ENCODE measurements at regions of chr2 and their contacts with region 1.

Region 1: DNA sequence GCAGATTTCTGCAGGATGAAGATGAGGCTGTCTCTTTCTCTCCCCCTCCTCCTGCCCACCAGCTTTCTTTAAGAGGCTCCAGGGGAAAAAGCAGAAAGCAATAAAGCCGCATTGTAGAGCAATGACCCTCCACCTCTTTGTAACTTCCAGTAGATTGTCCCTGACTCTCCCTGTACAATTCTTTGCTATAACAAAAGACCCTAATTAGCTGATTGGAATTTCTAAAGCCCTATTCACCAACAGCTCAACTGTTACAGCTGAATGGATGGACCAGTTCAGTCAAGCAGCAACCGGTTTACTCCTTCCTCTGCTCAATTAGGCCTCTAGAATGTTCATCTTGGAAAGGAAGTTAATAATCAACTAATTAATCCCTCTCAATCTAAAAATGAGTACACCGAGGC is 301.0 kb downstream of the STK39 start:
- DNase-seq: no peak
- ATAC-seq: no peak
- H3K4me3 ChIP-seq: no peak overlapping the region
- H3K27ac ChIP-seq: no peak overlapping the region
- H3K4me1 ChIP-seq: no peaks in the 10 kb centered on the region
- H3K27me3 ChIP-seq: no peaks in the 10 kb centered on the region
- CTCF ChIP-seq: no peak
- EP300 ChIP-seq: no peak
- POLR2A ChIP-seq: no peak
- RAD21 ChIP-seq: no peak

Region 2: GRCh38 chr2:167929484-167929883 is 17.0 kb before region 1 on chr2:
- CTCF ChIA-PET with region 1: no interaction called
- POLR2A ChIA-PET with region 1: no interaction called
- in situ Hi-C with region 1: no loop called
- intact Hi-C with region 1: no loop called
- DNase-seq: no peak
- ATAC-seq: no peak
- H3K4me3 ChIP-seq: no peak overlapping the region
- H3K27ac ChIP-seq: no peak overlapping the region
- H3K4me1 ChIP-seq: no peaks in the 10 kb centered on the region
- H3K27me3 ChIP-seq: peaks cover 0 to 8% of the 10 kb centered on the region in 2 experiments; a peak in 3 of 5 replicates
- CTCF ChIP-seq: no peak
- EP300 ChIP-seq: no peak
- POLR2A ChIP-seq: no peak
- RAD21 ChIP-seq: no peak

Region 3: GRCh38 chr2:168002021-168002553 is 55.6 kb after region 1 on chr2:
- CTCF ChIA-PET with region 1: no interaction called
- POLR2A ChIA-PET with region 1: no interaction called
- in situ Hi-C with region 1: no loop called
- intact Hi-C with region 1: loop called (anchors 2 kb)
- DNase-seq: no peak
- ATAC-seq: no peak
- H3K4me3 ChIP-seq: no peak overlapping the region
- H3K27ac ChIP-seq: no peak overlapping the region
- H3K4me1 ChIP-seq: no peaks in the 10 kb centered on the region
- H3K27me3 ChIP-seq: no peaks in the 10 kb centered on the region
- CTCF ChIP-seq: no peak
- EP300 ChIP-seq: no peak
- POLR2A ChIP-seq: no peak
- RAD21 ChIP-seq: no peak